Activated B cell treated with CpG ODN at 0.5 μM for 24 hours (primary cell): ENCODE measurements at regions of chr1 and their contacts with region 1.

Region 1: GRCh38 chr1:192808518-192809306 is at the start of gene RGS2:
- DNase-seq: peak; percentile 79
- ATAC-seq: peak; percentile 91
- H3K4me3 Mint-ChIP-seq: peak within 1 kb of the TSS; percentile 96
- H3K27ac Mint-ChIP-seq: peak within 1 kb of the TSS; percentile 90
- H3K4me1 Mint-ChIP-seq: peaks cover 48% of the 10 kb centered on the region
- H3K27me3 Mint-ChIP-seq: no peaks in the 10 kb centered on the region
- CTCF ChIP-seq: no peak
- total RNA-seq, gene RGS2: 31.1 and 32.7 TPM in 2 replicates

Region 2: DNA sequence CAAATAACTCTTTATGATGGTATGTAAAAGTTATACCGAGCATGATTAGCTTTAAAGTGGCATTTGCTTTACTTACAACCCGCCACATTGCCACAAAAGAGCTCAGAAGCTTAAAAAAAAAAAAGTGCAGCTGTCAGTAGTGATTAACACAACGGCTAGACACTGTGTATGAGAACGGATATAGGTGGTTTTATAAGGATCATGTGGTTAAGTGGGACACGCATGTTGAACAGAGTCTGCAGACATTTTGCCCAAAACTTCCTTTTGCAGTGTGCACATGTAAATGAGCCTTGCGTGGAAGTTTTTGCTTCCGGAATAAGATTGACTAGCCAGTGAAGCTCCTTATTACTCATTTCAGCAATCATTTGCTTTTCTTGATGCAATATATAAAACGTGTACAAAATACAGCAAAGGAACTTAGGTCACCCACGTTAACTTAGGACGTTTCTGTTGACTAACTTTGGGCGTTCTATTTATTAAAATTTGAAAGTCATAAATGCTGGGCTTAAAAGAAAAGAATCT is 291.9 kb before region 1 on chr1:
- CTCF ChIA-PET with region 1: interaction called, 3 read pairs
- POLR2A ChIA-PET with region 1: no interaction called
- intact Hi-C with region 1: loop called (anchors 1 kb)
- DNase-seq: peak; percentile 23
- ATAC-seq: peak; percentile 96
- H3K4me3 Mint-ChIP-seq: peak overlapping the region; percentile 75
- H3K27ac Mint-ChIP-seq: peak overlapping the region; percentile 65
- H3K4me1 Mint-ChIP-seq: peaks cover 59% of the 10 kb centered on the region
- H3K27me3 Mint-ChIP-seq: no peaks in the 10 kb centered on the region
- CTCF ChIP-seq: no peak

Region 3: DNA sequence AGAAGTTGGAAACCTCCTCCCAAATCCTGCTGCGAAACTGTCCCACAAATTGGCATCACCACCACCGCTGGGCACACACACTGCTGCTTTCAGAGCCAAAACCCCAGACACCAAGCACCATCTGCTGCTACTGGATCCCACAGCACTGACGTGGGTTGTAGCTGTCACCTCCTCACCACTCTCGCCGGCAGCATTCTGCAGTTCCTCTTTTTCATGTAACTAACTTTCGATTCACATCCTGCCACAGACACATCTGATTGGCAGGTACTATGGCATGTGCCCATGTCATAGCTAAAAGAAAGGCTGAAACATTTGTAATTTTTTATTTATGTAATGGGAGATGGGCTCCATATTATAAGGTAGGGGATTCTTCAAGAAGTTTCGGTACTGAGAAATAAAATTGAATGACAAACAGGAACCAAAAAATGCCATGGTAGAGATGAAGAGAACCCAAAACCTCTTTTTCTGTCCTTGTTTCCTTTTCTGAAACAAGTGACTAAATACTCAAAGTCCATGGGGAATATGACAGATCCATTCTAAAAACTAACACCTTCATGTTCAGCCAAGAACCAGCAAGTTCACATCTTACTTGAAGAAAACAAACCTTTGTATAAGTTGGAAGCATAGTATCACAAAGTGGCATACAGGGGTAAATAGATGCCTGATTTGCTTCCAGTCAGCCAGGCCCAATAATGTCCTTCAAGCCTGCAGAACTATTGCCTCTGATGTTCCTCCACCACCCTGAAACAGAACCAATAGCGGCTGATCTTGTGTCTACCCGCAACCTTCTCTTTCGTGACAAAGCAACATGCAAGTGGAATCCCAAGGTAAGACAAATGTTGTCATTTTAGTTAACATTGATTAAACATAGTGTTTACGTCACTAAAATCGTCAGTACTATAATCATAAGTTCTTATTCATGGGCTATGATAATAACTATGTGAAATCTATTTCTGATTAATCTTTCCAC is 199.3 kb before region 1 on chr1:
- CTCF ChIA-PET with region 1: interaction called, 4 read pairs
- POLR2A ChIA-PET with region 1: interaction called, 5 read pairs
- intact Hi-C with region 1: loop called (anchors 1 kb)
- DNase-seq: peak; percentile 56
- ATAC-seq: peak; percentile 91
- H3K4me3 Mint-ChIP-seq: peak overlapping the region; percentile 57
- H3K27ac Mint-ChIP-seq: peak overlapping the region; percentile 86
- H3K4me1 Mint-ChIP-seq: peaks cover 32% of the 10 kb centered on the region
- H3K27me3 Mint-ChIP-seq: peaks cover 4% of the 10 kb centered on the region
- CTCF ChIP-seq: no peak

Region 4: DNA sequence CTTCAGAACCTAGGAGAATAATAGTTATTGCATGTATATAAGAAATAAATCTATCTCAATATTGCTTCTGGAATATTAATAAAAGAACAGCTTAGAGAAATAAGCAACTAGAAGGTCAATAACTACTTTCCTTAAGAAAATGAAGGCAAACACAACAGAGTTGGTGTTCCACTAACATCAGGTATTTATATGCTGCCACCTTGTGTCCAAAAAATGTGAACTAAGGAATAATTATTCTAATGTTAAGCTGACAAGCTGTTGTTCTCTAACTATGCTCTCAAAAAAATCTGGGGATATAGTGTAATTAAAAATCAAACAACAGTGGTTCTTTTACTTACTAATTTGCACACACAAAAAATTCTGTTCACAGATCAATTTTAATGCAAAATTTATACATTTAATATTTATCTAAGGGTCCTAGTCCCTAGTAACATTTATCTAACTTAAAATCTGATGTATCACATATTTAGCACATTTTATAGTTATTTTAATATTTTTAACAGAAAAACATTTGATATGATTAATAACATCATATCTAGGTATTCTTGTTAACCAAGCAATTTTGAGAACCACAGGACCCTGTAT is 210.8 kb after region 1 on chr1:
- CTCF ChIA-PET with region 1: interaction called, 100 read pairs
- POLR2A ChIA-PET with region 1: interaction called, 4 read pairs
- intact Hi-C with region 1: loop called (anchors 1 kb)
- DNase-seq: no peak
- ATAC-seq: no peak
- H3K4me3 Mint-ChIP-seq: no peak overlapping the region
- H3K27ac Mint-ChIP-seq: no peak overlapping the region
- H3K4me1 Mint-ChIP-seq: no peaks in the 10 kb centered on the region
- H3K27me3 Mint-ChIP-seq: no peaks in the 10 kb centered on the region
- CTCF ChIP-seq: no peak

Region 5: DNA sequence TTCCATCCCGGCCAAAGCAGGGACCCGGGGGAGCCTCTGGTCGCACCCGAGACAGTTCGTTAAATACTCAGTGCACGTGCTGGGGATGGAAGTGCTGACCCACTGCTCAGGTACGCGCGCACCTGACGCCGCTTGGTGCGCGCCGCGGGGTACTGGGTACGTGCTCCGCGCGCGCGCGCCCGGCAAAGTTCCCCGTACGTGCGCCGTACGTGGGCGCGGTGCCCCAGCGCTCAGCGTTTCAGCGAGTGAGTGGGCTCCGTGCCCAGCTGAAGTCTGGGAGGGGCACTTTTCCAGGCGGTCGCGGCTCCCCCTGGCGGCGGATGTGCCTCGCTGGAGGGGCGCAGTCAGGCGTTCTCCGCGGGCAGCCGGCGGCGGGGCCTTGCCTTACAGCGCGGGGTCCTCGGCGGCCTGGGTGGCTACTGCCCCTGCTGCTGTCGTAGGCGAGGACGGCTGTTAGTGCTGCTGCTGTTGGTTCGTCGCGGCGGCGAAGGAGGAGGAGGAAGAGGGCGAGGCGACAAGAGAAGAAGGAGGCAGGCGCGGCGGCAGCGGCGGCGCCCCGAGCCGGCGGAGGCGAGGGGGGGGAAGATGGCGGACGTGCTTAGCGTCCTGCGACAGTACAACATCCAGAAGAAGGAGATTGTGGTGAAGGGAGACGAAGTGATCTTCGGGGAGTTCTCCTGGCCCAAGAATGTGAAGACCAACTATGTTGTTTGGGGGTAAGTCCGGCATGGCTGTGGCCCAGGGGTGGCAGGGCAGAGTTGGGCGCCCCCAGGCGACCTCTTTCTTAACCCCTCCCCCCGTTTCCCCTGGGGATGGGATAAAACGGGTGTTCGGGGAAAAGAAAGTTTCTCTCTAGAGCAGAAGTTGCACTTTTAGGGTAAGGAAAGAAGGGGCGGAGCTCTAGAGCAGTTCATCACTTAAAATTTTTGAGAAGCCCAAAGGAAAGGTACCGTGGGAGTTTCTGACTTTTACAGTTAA is 313.2 kb after region 1 on chr1 and contains the start of gene CDC73:
- CTCF ChIA-PET with region 1: interaction called, 9 read pairs
- POLR2A ChIA-PET with region 1: interaction called, 8 read pairs
- intact Hi-C with region 1: loop called (anchors 1 kb)
- DNase-seq: peak; percentile 99
- ATAC-seq: peak; percentile 90
- H3K4me3 Mint-ChIP-seq: peak within 1 kb of the TSS; percentile 93
- H3K27ac Mint-ChIP-seq: peak within 1 kb of the TSS; percentile 94
- H3K4me1 Mint-ChIP-seq: peaks cover 43% of the 10 kb centered on the region
- H3K27me3 Mint-ChIP-seq: no peaks in the 10 kb centered on the region
- CTCF ChIP-seq: peak; percentile 17
- total RNA-seq, gene CDC73: 55.9 and 59.1 TPM in 2 replicates

Region 6: DNA sequence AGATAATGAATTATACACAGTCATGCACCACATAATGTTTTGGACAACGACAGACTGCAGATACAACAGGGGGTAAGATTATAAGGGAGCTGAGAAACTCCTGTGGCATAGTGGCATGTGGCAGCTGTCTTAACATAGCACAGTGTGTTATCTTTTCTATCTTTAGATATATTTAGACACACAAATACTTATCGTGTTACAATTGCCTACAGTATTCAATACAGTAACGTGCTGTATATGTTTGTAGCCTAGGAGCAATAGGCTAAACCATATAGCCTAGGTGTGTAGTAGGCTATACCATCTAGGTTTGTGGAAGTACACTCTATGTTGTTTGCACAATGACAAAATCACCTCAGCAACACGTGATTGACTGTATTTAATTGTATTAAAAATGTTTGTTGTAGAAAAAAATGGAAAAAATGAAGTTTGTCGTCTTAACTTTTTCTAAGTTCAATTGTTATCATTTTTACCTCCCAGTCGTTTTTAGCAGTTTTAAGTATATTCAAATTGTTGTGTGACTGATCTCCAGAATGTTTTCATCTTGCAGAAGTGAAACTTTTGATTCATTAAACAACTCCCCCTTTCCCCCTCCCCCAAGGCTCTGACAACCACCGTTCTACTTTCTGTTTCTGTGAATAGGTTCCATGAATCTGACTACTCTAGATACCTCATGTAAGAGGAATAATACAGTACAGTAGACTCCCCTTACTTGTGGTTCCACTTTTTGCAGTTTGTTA is 728.7 kb after region 1 on chr1:
- CTCF ChIA-PET with region 1: no interaction called
- POLR2A ChIA-PET with region 1: no interaction called
- intact Hi-C with region 1: loop called (anchors 5 kb)
- DNase-seq: peak; percentile 25
- ATAC-seq: peak; percentile 95
- H3K4me3 Mint-ChIP-seq: peak overlapping the region; percentile 17
- H3K27ac Mint-ChIP-seq: peak overlapping the region; percentile 88
- H3K4me1 Mint-ChIP-seq: peaks cover 48% of the 10 kb centered on the region
- H3K27me3 Mint-ChIP-seq: no peaks in the 10 kb centered on the region
- CTCF ChIP-seq: no peak